ENCODE measurements at regions of chr14 and their contacts with region 1.

Region 1: GRCh38 chr14:65206448-65207096 is 104.3 kb upstream of the MAX start:
- DNase-seq: peak; percentile 35
- H3K4me3 Mint-ChIP-seq: peak overlapping the region; percentile 54
- H3K27ac Mint-ChIP-seq: peak overlapping the region; percentile 82
- H3K4me1 Mint-ChIP-seq: peaks cover 61% of the 10 kb centered on the region
- H3K27me3 Mint-ChIP-seq: peaks cover 2% of the 10 kb centered on the region

Region 2: DNA sequence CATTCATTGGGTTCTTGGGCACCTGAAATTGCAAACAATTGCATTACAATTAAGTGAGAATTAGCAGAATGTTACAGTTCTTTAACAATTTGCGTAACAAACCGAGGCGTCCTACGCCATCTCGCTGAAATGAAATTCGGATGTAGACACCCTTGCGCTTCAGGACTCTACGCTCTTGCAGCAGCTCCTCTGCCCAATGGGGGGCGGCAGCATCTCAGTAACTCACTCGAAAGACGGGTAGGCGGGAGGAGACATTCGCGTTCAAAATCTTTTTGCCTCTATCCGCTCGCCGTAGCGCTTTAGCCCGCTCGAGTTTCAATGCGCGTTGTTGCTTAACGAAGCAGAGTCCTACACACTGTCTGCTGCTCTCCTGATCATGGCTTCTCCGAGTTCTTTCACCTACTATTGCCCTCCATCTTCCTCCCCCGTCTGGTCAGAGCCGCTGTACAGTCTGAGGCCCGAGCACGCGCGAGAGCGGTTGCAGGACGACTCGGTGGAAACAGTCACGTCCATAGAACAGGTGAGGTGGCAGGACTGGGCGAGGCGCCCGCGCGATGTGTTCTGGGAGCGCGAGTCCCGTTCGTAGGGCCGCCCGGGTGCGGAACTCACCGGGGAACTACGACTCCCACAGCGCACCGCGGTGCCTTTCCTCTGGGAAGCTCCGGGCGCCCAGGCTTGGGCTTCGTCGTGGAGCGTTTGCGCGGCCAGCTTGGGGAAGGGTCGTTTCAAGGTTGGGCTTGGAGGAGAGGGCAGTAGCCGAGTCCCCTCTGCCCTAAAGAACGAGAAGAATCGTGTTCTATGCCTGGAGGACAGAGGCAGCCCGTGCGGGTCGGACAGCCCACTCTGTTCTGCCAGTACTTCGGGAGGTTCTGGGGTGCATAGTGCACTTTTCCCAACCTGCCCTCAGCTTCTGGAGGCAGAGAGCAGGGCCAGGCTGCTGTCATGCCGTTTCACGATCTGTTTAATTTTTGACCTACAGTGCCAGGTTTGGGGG is 219.7 kb before region 1 on chr14 and contains the start of gene FNTB:
- CTCF ChIA-PET with region 1: no interaction called
- POLR2A ChIA-PET with region 1: no interaction called
- intact Hi-C with region 1: loop called (anchors 5 kb)
- DNase-seq: peak; percentile 95
- H3K4me3 Mint-ChIP-seq: peak within 1 kb of the TSS; percentile 98
- H3K27ac Mint-ChIP-seq: peak within 1 kb of the TSS; percentile 98
- H3K4me1 Mint-ChIP-seq: peaks cover 39% of the 10 kb centered on the region
- H3K27me3 Mint-ChIP-seq: no peaks in the 10 kb centered on the region
- total RNA-seq, gene FNTB: 8.8 to 12.3 TPM

Region 3: DNA sequence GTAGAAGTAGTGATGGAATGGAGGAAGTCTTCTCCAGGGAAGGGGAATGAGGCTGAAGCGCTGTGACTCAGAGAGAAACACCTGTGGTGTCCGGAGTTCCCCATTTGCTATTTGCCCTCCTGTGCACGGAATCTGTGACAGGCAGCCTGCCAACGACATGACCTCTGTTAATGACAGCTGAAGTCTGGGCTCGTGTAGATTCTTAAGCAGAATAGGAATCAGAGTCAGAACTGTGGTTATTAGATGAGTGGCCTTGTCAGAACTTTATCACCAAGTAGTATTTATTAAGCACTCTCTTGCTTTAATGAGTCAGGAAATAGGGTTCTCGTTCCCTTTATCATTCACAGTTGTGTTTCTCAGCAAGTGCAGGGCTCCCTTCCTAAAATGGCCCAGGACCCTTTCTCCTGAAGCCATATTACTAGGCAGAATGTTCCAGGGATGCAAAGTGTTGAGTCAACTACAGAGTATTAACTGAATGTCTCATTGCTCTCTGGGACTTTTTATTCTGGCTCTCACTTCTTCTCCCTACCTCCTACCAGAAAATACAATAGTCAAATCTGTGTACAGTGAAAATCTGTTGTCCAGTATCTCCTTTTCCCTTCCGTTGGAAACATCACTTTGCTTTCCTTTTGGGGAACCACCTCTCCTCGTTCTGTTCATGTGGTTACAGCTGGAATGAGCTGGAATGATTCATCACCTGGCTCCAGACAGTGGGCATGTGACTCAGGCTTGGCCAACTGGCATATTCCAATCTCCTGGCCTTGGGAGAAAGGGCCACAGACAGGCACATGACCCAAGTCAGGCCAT is 26.5 kb before region 1 on chr14:
- CTCF ChIA-PET with region 1: interaction called, 3 read pairs
- POLR2A ChIA-PET with region 1: interaction called, 4 read pairs
- intact Hi-C with region 1: loop called (anchors 1 kb)
- DNase-seq: peak; percentile 79
- H3K4me3 Mint-ChIP-seq: no peak overlapping the region
- H3K27ac Mint-ChIP-seq: peak overlapping the region; percentile 21
- H3K4me1 Mint-ChIP-seq: peaks cover 18% of the 10 kb centered on the region
- H3K27me3 Mint-ChIP-seq: peaks cover 5% of the 10 kb centered on the region

Region 4: GRCh38 chr14:65260786-65261185 is 54.2 kb after region 1 on chr14:
- CTCF ChIA-PET with region 1: no interaction called
- POLR2A ChIA-PET with region 1: no interaction called
- intact Hi-C with region 1: no loop called
- DNase-seq: no peak
- H3K4me3 Mint-ChIP-seq: no peak overlapping the region
- H3K27ac Mint-ChIP-seq: no peak overlapping the region
- H3K4me1 Mint-ChIP-seq: peaks cover 7% of the 10 kb centered on the region
- H3K27me3 Mint-ChIP-seq: no peaks in the 10 kb centered on the region

Region 5: GRCh38 chr14:65302571-65303189 is 96.1 kb after region 1 on chr14:
- CTCF ChIA-PET with region 1: no interaction called
- POLR2A ChIA-PET with region 1: no interaction called
- intact Hi-C with region 1: loop called (anchors 5 kb)
- DNase-seq: peak; percentile 87
- H3K4me3 Mint-ChIP-seq: peak overlapping the region; percentile 40
- H3K27ac Mint-ChIP-seq: peak overlapping the region; percentile 87
- H3K4me1 Mint-ChIP-seq: peaks cover 45% of the 10 kb centered on the region
- H3K27me3 Mint-ChIP-seq: no peaks in the 10 kb centered on the region

Region 6: GRCh38 chr14:65478596-65478995 is 272.0 kb after region 1 on chr14:
- CTCF ChIA-PET with region 1: no interaction called
- POLR2A ChIA-PET with region 1: no interaction called
- intact Hi-C with region 1: loop called (anchors 5 kb)
- DNase-seq: no peak
- H3K4me3 Mint-ChIP-seq: no peak overlapping the region
- H3K27ac Mint-ChIP-seq: no peak overlapping the region
- H3K4me1 Mint-ChIP-seq: peaks cover 70% of the 10 kb centered on the region
- H3K27me3 Mint-ChIP-seq: no peaks in the 10 kb centered on the region

Region 7: GRCh38 chr14:65847075-65847847 is 640.7 kb after region 1 on chr14:
- CTCF ChIA-PET with region 1: interaction called, 3 read pairs
- POLR2A ChIA-PET with region 1: no interaction called
- intact Hi-C with region 1: loop called (anchors 2 kb)
- DNase-seq: peak; percentile 86
- H3K4me3 Mint-ChIP-seq: peak overlapping the region; percentile 22
- H3K27ac Mint-ChIP-seq: peak overlapping the region; percentile 79
- H3K4me1 Mint-ChIP-seq: peaks cover 66% of the 10 kb centered on the region
- H3K27me3 Mint-ChIP-seq: no peaks in the 10 kb centered on the region

Measured in activated CD4-positive, alpha-beta memory T cell treated with anti-CD3 and anti-CD28 coated beads for 36 hours (primary cell).